ENCODE measurements at regions of chr1 and their contacts with region 1.

Region 1: DNA sequence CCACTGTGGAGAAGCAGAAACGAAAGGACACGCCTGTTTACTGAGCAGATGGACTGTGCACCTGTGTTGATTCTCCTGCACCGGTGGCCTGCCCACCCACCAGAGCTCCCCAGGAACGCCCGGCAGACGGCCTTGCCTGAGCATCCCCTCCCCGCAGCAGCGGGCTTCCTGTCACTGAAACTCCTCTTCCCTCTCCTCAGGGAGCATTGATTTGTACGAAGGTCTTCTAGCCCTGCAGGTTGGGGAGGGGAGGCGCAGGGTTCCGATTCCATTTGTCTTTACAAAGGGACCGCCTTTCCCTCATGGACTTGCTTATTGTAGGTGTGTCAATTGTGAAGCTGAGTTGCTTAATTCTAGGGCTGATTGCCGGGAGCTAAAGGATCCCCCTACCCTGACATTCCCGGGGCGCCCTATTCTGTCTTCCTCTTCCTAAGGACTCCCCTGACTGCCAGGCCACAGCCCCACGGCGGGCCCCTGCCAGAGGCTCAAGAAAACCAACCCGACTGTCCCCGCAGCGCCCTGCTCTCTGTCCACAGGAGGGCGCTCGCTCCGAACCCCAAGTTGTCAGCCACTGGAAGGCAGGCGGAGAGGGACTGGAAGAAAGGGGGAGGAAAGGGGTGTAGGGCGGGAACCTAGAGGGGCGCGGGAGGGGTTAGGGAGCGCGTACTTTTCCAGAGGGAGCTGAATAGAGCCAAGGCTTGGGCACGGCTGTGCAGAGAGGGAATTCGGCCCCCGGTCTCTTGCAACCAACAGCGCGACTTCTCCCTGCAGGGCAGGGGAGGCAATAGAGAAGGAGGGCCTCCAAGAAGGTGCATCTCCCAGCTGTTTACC is 2.8 kb downstream of the S100A6 start:
- DNase-seq: peak; percentile 46 to 87 (median 72)
- ATAC-seq: peak; percentile 9 to 39 (median 24)
- H3K4me3 ChIP-seq: peak overlapping the region in 1 of 2 donors; percentile 21
- H3K4me3 Mint-ChIP-seq: peak overlapping the region; percentile 90 to 94 (median 94)
- H3K27ac ChIP-seq: peak overlapping the region; percentile 96
- H3K27ac Mint-ChIP-seq: peak overlapping the region; percentile 91 to 97
- H3K4me1 ChIP-seq: peaks cover 33 to 58% of the 10 kb centered on the region in 2 experiments
- H3K4me1 Mint-ChIP-seq: peaks cover 57 to 74% (median 65%) of the 10 kb centered on the region in 3 donors
- H3K27me3 ChIP-seq: no peaks in the 10 kb centered on the region
- H3K27me3 Mint-ChIP-seq: no peaks in the 10 kb centered on the region

Region 2: GRCh38 chr1:153488731-153489130 is 44.3 kb before region 1 on chr1:
- CTCF ChIA-PET with region 1: no interaction called
- POLR2A ChIA-PET with region 1: no interaction called
- DNase-seq: no peak
- ATAC-seq: no peak
- H3K4me3 ChIP-seq: no peak overlapping the region
- H3K4me3 Mint-ChIP-seq: no peak overlapping the region
- H3K27ac ChIP-seq: no peak overlapping the region
- H3K27ac Mint-ChIP-seq: no peak overlapping the region
- H3K4me1 ChIP-seq: no peaks in the 10 kb centered on the region
- H3K4me1 Mint-ChIP-seq: no peaks in the 10 kb centered on the region
- H3K27me3 ChIP-seq: peaks cover 0 to 43% of the 10 kb centered on the region in 2 experiments
- H3K27me3 Mint-ChIP-seq: peaks cover 23 to 37% of the 10 kb centered on the region in 2 donors

Region 3: GRCh38 chr1:153510984-153511410 is 22.0 kb before region 1 on chr1:
- CTCF ChIA-PET with region 1: interaction called, 7 to 22 read pairs
- POLR2A ChIA-PET with region 1: no interaction called
- DNase-seq: peak; percentile 29 to 86 (median 69)
- ATAC-seq: peak; percentile 85 to 90 (median 88)
- H3K4me3 ChIP-seq: no peak overlapping the region
- H3K4me3 Mint-ChIP-seq: no peak overlapping the region
- H3K27ac ChIP-seq: no peak overlapping the region
- H3K27ac Mint-ChIP-seq: no peak overlapping the region
- H3K4me1 ChIP-seq: peaks cover 0 to 13% of the 10 kb centered on the region in 2 experiments
- H3K4me1 Mint-ChIP-seq: peaks cover 4 to 10% (median 8%) of the 10 kb centered on the region in 3 donors
- H3K27me3 ChIP-seq: no peaks in the 10 kb centered on the region
- H3K27me3 Mint-ChIP-seq: no peaks in the 10 kb centered on the region

Region 4: GRCh38 chr1:153545067-153546055 is 12.4 kb after region 1 on chr1 and contains the start of gene S100A4:
- CTCF ChIA-PET with region 1: interaction called, 8 to 35 read pairs
- POLR2A ChIA-PET with region 1: interaction called, 4 to 14 read pairs
- DNase-seq: peak; percentile 58 to 89 (median 74)
- ATAC-seq: peak; percentile 78 to 85 (median 82)
- H3K4me3 ChIP-seq: peak within 1 kb of the TSS; percentile 49 to 76
- H3K4me3 Mint-ChIP-seq: peak within 1 kb of the TSS; percentile 91 to 95 (median 93)
- H3K27ac ChIP-seq: peak within 1 kb of the TSS; percentile 86
- H3K27ac Mint-ChIP-seq: peak within 1 kb of the TSS; percentile 100
- H3K4me1 ChIP-seq: peaks cover 56 to 72% of the 10 kb centered on the region in 2 experiments
- H3K4me1 Mint-ChIP-seq: peaks cover 66 to 83% (median 74%) of the 10 kb centered on the region in 3 donors
- H3K27me3 ChIP-seq: peaks cover 0 to 3% of the 10 kb centered on the region in 2 experiments
- H3K27me3 Mint-ChIP-seq: no peaks in the 10 kb centered on the region
- total RNA-seq, gene S100A4: 297 to 698 (median 384) TPM

Region 5: DNA sequence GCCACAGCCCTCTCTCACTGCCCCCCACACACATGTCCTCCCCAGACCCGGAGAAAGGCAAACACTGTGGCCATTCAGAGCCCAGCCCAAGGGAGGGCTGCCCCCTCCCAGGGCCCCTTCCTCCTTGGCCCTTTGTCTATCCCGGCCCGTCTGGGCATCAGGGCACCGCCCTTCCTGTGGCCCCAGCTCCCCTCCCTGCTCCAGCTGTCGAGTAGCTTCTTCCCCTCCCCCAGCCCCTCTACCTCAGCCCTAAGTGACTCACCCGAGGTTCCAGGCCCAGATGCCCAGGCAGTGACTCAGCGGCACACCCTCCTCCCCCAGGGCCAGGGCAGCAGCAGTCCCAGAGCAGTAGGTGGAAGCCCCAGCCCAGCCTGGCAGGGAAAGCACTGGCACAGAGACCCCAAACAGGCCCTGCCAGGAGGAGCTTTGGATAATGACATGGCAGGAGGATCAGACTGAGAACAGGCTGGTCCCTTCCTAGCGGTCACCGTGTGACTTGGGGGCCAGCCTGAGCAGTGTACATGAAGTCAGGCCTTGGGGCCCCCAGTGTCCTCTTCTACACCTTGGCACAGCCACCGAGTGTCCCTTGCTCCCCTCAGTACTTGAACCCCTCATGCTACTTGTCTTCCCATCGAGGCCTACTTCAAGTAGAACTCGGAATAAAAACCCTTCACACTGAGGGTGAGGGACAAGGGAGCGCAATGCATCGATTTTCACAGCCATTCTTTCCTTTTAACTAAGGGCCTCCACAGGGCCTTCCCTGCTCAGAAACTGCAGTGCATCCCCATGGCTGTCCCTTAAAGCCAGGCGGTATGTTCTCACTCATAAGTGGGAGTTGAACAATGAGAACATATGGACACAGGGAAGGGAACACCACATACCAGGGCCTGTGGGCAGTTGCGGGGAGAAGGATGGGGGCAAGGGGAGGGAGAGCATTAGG is 33.7 kb after region 1 on chr1:
- CTCF ChIA-PET with region 1: interaction called, 13 to 27 read pairs
- POLR2A ChIA-PET with region 1: interaction called, 3 to 8 read pairs
- DNase-seq: peak; percentile 32 to 86 (median 56)
- ATAC-seq: peak; percentile 71 to 96 (median 94)
- H3K4me3 ChIP-seq: no peak overlapping the region
- H3K4me3 Mint-ChIP-seq: peak overlapping the region in 2 of 3 donors; percentile 45 to 61
- H3K27ac ChIP-seq: peak overlapping the region; percentile 74
- H3K27ac Mint-ChIP-seq: peak overlapping the region; percentile 90 to 97
- H3K4me1 ChIP-seq: peaks cover 4 to 37% of the 10 kb centered on the region in 2 experiments
- H3K4me1 Mint-ChIP-seq: peaks cover 32 to 35% (median 32%) of the 10 kb centered on the region in 3 donors
- H3K27me3 ChIP-seq: peaks cover 0 to 7% of the 10 kb centered on the region in 2 experiments
- H3K27me3 Mint-ChIP-seq: peaks cover 0 to 2% of the 10 kb centered on the region in 2 donors

Region 6: GRCh38 chr1:153572569-153573015 is 39.6 kb after region 1 on chr1:
- CTCF ChIA-PET with region 1: interaction called, 13 to 27 read pairs
- POLR2A ChIA-PET with region 1: interaction called, 3 to 7 read pairs
- DNase-seq: peak in 30 of 35 experiments; percentile 12 to 60 (median 34)
- ATAC-seq: peak; percentile 68 to 87 (median 76)
- H3K4me3 ChIP-seq: no peak overlapping the region
- H3K4me3 Mint-ChIP-seq: no peak overlapping the region
- H3K27ac ChIP-seq: no peak overlapping the region
- H3K27ac Mint-ChIP-seq: peak overlapping the region; percentile 34 to 43
- H3K4me1 ChIP-seq: peaks cover 0 to 13% of the 10 kb centered on the region in 2 experiments
- H3K4me1 Mint-ChIP-seq: peaks cover 12 to 24% (median 22%) of the 10 kb centered on the region in 3 donors
- H3K27me3 ChIP-seq: peaks cover 0 to 22% of the 10 kb centered on the region in 2 experiments
- H3K27me3 Mint-ChIP-seq: peaks cover 5 to 10% of the 10 kb centered on the region in 2 donors

Region 7: DNA sequence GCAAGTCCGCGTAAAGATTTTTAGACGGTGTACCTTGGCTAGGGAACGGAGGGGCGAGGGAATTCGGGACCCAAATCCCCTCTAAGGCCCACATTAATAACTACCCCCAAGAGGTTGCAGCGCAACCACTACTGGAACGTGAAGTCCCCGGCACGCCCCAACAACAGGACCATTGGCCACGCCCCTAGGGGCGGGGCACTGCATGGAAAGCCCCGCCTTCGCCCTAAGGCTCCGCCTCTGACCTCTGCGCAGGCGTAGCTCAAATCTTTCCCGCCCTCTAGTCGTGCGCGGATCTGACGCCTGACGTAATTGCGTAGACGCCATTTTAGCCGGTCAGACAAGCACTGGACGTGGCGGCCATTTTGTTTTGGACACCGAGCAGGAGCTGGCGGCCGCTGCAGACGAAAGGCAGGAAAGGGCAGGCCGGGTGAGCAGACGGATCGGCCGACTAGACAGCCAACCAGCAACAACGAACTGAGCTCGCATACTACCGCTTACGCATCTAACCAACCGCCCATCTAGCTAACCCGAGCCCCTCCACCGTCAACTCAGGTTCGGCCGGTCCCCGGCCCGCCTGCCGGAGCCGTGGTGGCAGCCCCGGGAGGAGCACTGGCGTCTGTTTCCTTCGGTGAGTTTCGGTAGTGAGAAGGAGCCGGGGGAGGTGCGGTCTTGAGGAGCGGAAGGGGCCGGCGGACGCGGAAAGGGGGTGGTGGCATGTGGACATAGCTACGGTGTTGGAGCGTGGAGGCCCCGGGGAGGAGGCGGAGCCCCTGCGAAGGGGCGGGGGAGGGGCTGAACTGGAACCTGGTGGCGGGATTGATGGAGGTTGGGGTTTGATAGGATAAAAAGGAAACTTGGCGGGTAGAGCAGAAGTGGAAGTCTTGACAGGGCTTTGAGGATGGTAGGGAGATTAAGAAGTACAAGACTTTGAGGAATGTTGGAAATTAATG is 101.0 kb after region 1 on chr1 and contains the start of gene CHTOP:
- CTCF ChIA-PET with region 1: interaction called in 1 of 2 experiments, 10 read pairs
- POLR2A ChIA-PET with region 1: interaction called in 1 of 2 experiments, 3 read pairs
- DNase-seq: peak; percentile 88 to 99 (median 94)
- ATAC-seq: peak; percentile 89 to 96 (median 90)
- H3K4me3 ChIP-seq: peak within 1 kb of the TSS; percentile 96 to 98
- H3K4me3 Mint-ChIP-seq: peak within 1 kb of the TSS; percentile 97 to 100 (median 98)
- H3K27ac ChIP-seq: peak within 1 kb of the TSS; percentile 99
- H3K27ac Mint-ChIP-seq: peak within 1 kb of the TSS; percentile 99 to 100
- H3K4me1 ChIP-seq: peaks cover 6 to 30% of the 10 kb centered on the region in 2 experiments
- H3K4me1 Mint-ChIP-seq: peaks cover 38 to 46% (median 41%) of the 10 kb centered on the region in 3 donors
- H3K27me3 ChIP-seq: no peaks in the 10 kb centered on the region
- H3K27me3 Mint-ChIP-seq: no peaks in the 10 kb centered on the region
- total RNA-seq, gene CHTOP: 76.7 to 131 (median 130) TPM